GM12878 (cell line): ENCODE measurements at regions of chr1 and their contacts with region 1.

Region 1: GRCh38 chr1:207454046-207454964 is at the start of gene CR2:
- DNase-seq: no peak
- ATAC-seq: peak; percentile 88
- H3K4me3 ChIP-seq: peak within 1 kb of the TSS; percentile 77
- H3K27ac ChIP-seq: peak within 1 kb of the TSS; percentile 33
- H3K4me1 ChIP-seq: peaks cover 15% of the 10 kb centered on the region
- H3K27me3 ChIP-seq: no peaks in the 10 kb centered on the region
- CTCF ChIP-seq: peak; percentile 42 to 62 (median 60)
- EP300 ChIP-seq: 0 out of 4 replicates have a peak, but pooled peaks of 1 of the 2 experiments have one; percentile 7
- POLR2A ChIP-seq: peak; percentile 95
- RAD21 ChIP-seq: peak; percentile 51
- polyA plus RNA-seq, gene CR2: 21.1 to 24.4 TPM

Region 2: GRCh38 chr1:207388721-207389120 is 65.6 kb before region 1 on chr1:
- CTCF ChIA-PET with region 1: no interaction called
- POLR2A ChIA-PET with region 1: no interaction called
- RAD21 ChIA-PET with region 1: no interaction called
- SMC1A ChIA-PET with region 1: no interaction called
- in situ Hi-C with region 1: no loop called
- intact Hi-C with region 1: no loop called
- DNase-seq: no peak
- ATAC-seq: no peak
- H3K4me3 ChIP-seq: no peak overlapping the region
- H3K27ac ChIP-seq: no peak overlapping the region
- H3K4me1 ChIP-seq: no peaks in the 10 kb centered on the region
- H3K27me3 ChIP-seq: no peaks in the 10 kb centered on the region
- CTCF ChIP-seq: no peak
- EP300 ChIP-seq: no peak
- POLR2A ChIP-seq: no peak
- RAD21 ChIP-seq: no peak

Region 3: GRCh38 chr1:207414606-207415108 is 39.6 kb before region 1 on chr1:
- CTCF ChIA-PET with region 1: interaction called, 13 read pairs
- POLR2A ChIA-PET with region 1: interaction called, 5 read pairs
- RAD21 ChIA-PET with region 1: interaction called, 7 read pairs
- SMC1A ChIA-PET with region 1: interaction called, 6 read pairs
- in situ Hi-C with region 1: no loop called
- intact Hi-C with region 1: loop called (anchors 1 kb)
- DNase-seq: peak; percentile 93
- ATAC-seq: peak; percentile 85
- H3K4me3 ChIP-seq: no peak overlapping the region
- H3K27ac ChIP-seq: peak overlapping the region; percentile 86
- H3K4me1 ChIP-seq: peaks cover 40% of the 10 kb centered on the region
- H3K27me3 ChIP-seq: no peaks in the 10 kb centered on the region
- CTCF ChIP-seq: no peak
- EP300 ChIP-seq: peak; percentile 60 to 64; a peak in 2 of 4 replicates
- POLR2A ChIP-seq: peak; percentile 39; the same call in 1 of the 2 replicates
- RAD21 ChIP-seq: no peak

Region 4: GRCh38 chr1:207423560-207424292 is 30.6 kb before region 1 on chr1:
- CTCF ChIA-PET with region 1: interaction called, 7 read pairs
- POLR2A ChIA-PET with region 1: no interaction called
- RAD21 ChIA-PET with region 1: interaction called, 11 read pairs
- SMC1A ChIA-PET with region 1: interaction called, 12 read pairs
- in situ Hi-C with region 1: no loop called
- intact Hi-C with region 1: no loop called
- DNase-seq: no peak
- ATAC-seq: peak; percentile 73
- H3K4me3 ChIP-seq: peak overlapping the region; percentile 38; the same call in 1 of the 2 replicates
- H3K27ac ChIP-seq: no peak overlapping the region
- H3K4me1 ChIP-seq: peaks cover 30% of the 10 kb centered on the region
- H3K27me3 ChIP-seq: no peaks in the 10 kb centered on the region
- CTCF ChIP-seq: peak; percentile 24 to 44 (median 27); a peak in 5 of 6 replicates
- EP300 ChIP-seq: no peak
- POLR2A ChIP-seq: no peak
- RAD21 ChIP-seq: peak; percentile 38; the same call in 1 of the 2 replicates

Region 5: GRCh38 chr1:207429963-207430362 is 24.3 kb before region 1 on chr1:
- CTCF ChIA-PET with region 1: interaction called, 4 read pairs
- POLR2A ChIA-PET with region 1: no interaction called
- RAD21 ChIA-PET with region 1: interaction called, 11 read pairs
- SMC1A ChIA-PET with region 1: interaction called, 12 read pairs
- in situ Hi-C with region 1: no loop called
- intact Hi-C with region 1: loop called (anchors 2 kb)
- DNase-seq: peak; percentile 70
- ATAC-seq: peak; percentile 58
- H3K4me3 ChIP-seq: no peak overlapping the region
- H3K27ac ChIP-seq: peak overlapping the region; percentile 19
- H3K4me1 ChIP-seq: peaks cover 39% of the 10 kb centered on the region
- H3K27me3 ChIP-seq: no peaks in the 10 kb centered on the region
- CTCF ChIP-seq: no peak
- EP300 ChIP-seq: no peak
- POLR2A ChIP-seq: no peak
- RAD21 ChIP-seq: 0 out of 2 replicates have a peak, but pooled peaks have one; percentile 11

Region 6: GRCh38 chr1:207499573-207499972 is 45.3 kb after region 1 on chr1:
- CTCF ChIA-PET with region 1: interaction called, 7 read pairs
- POLR2A ChIA-PET with region 1: interaction called, 4 read pairs
- RAD21 ChIA-PET with region 1: interaction called, 6 read pairs
- SMC1A ChIA-PET with region 1: interaction called, 29 read pairs
- in situ Hi-C with region 1: no loop called
- intact Hi-C with region 1: loop called (anchors 2 kb)
- DNase-seq: peak; percentile 64
- ATAC-seq: peak; percentile 81
- H3K4me3 ChIP-seq: no peak overlapping the region
- H3K27ac ChIP-seq: no peak overlapping the region
- H3K4me1 ChIP-seq: peaks cover 6% of the 10 kb centered on the region
- H3K27me3 ChIP-seq: no peaks in the 10 kb centered on the region; a peak in 1 of 4 replicates
- CTCF ChIP-seq: peak; percentile 64 to 85 (median 80)
- EP300 ChIP-seq: no peak
- POLR2A ChIP-seq: no peak
- RAD21 ChIP-seq: peak; percentile 96

Region 7: GRCh38 chr1:207514890-207515289 is 60.6 kb after region 1 on chr1:
- CTCF ChIA-PET with region 1: no interaction called
- POLR2A ChIA-PET with region 1: no interaction called
- RAD21 ChIA-PET with region 1: no interaction called
- SMC1A ChIA-PET with region 1: no interaction called
- in situ Hi-C with region 1: no loop called
- intact Hi-C with region 1: no loop called
- DNase-seq: no peak
- ATAC-seq: no peak
- H3K4me3 ChIP-seq: no peak overlapping the region
- H3K27ac ChIP-seq: no peak overlapping the region
- H3K4me1 ChIP-seq: no peaks in the 10 kb centered on the region
- H3K27me3 ChIP-seq: no peaks in the 10 kb centered on the region
- CTCF ChIP-seq: no peak
- EP300 ChIP-seq: no peak
- POLR2A ChIP-seq: no peak
- RAD21 ChIP-seq: no peak

Region 8: DNA sequence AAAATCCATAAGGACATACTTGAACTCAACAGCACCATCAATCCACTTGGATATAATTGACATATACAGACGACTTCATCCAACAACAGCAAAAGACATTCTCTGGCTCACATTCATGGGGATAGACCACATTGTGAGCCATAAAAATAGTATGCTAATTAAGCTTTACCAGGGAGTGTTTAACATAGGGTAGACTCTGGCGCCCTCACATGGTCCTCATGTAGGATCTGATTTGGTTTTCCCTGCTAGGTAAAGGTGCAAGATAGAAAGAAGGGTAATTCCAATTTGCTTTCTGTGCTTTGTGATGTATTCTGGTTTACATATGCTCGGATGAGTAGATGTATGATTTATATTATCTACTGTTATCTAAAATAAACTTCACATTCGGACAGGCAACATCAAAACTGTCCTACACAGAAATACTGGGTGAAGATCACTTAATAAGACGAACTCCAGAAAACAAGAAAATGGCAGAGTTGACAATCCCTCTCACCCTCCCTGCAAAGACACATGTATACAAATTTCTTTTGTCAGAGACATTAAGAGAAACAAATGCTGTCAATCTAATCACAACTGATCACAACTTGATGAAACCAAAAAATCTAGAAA is 218.3 kb after region 1 on chr1:
- CTCF ChIA-PET with region 1: no interaction called
- POLR2A ChIA-PET with region 1: no interaction called
- RAD21 ChIA-PET with region 1: no interaction called
- SMC1A ChIA-PET with region 1: no interaction called
- in situ Hi-C with region 1: no loop called
- intact Hi-C with region 1: no loop called
- DNase-seq: no peak
- ATAC-seq: peak; percentile 58; the same call in 2 of the 3 replicates
- H3K4me3 ChIP-seq: no peak overlapping the region
- H3K27ac ChIP-seq: no peak overlapping the region
- H3K4me1 ChIP-seq: peaks cover 5% of the 10 kb centered on the region
- H3K27me3 ChIP-seq: peaks cover 0 to 4% of the 10 kb centered on the region in 2 experiments; a peak in 2 of 4 replicates
- CTCF ChIP-seq: peak; percentile 49 to 70 (median 60); a peak in 5 of 6 replicates
- EP300 ChIP-seq: no peak
- POLR2A ChIP-seq: no peak
- RAD21 ChIP-seq: peak; percentile 80

Region 9: DNA sequence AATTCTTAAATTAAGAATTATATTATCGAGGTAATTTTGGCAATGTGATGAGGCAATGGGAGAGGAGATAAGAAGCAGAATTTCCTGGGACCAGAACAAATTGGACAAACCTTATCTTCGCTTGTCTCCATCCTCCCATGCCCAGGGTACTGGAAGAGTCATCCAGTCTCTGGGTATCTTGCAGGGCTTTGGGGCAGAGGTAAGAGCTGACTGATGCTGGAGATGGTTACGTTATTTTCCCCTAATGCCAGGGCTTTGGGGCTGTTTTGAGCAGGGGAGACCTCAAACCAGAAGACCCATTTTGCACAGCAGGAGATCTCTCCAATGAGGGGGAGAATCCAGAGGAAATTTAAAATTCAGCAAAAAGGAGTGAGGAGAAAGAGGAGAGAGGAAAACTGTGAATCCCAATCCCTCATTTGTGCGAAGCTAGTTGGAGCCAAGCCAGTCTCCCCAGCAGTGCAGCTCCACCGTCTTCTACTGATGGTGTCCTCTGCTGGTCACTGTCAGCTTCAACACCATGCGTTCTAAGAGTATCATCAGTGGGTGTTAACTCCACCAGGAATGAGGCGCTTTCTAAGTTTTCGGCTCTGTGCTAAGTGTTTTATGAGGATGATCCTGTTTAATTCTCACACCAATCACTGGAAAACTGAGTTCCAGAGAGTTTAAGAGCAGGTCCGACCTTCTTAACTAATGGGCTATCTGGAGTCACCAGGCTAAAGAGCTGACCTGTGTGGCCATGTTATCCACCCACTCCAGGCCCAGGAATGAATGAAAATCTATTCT is 543.4 kb after region 1 on chr1:
- CTCF ChIA-PET with region 1: no interaction called
- POLR2A ChIA-PET with region 1: no interaction called
- RAD21 ChIA-PET with region 1: no interaction called
- SMC1A ChIA-PET with region 1: no interaction called
- in situ Hi-C with region 1: no loop called
- intact Hi-C with region 1: no loop called
- DNase-seq: no peak
- ATAC-seq: peak; percentile 99
- H3K4me3 ChIP-seq: no peak overlapping the region
- H3K27ac ChIP-seq: no peak overlapping the region
- H3K4me1 ChIP-seq: no peaks in the 10 kb centered on the region
- H3K27me3 ChIP-seq: peaks cover 2 to 3% of the 10 kb centered on the region in 2 experiments; a peak in 2 of 4 replicates
- CTCF ChIP-seq: peak; percentile 63 to 89 (median 82)
- EP300 ChIP-seq: no peak
- POLR2A ChIP-seq: no peak
- RAD21 ChIP-seq: peak; percentile 26